ENCODE measurements at regions of chr4 and their contacts with region 1.

Region 1: DNA sequence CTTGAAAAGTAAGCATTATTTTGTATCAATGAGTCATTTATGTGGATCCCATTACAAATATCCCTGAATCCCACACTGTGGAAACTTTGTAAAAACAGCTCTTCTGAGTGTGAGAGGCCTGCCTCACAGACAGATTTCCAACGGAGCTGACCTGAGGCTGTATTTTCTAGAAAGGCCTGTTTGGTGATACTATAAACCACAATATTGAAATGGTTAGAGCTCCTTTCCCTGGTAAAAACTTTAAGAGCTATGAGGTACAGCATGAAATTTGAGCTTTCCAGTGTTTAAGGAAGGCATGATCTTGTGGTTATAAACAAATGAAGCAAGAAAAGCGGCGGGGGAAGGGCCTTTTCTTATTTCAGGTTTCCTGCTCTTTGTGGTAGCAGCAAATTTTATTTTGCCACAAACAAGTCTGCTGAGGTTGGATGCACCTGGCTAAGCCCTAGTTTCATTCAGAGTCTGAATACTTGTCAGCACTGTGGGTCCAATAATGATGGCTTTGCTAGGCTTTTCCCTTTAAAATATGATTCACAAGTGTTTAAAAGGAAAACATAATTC is 86.8 kb upstream of the ETNPPL start:
- DNase-seq: peak in 3 of 9 donors; percentile 13 to 35 (median 24)
- ATAC-seq: no peak
- H3K4me3 ChIP-seq: no peak overlapping the region
- H3K4me3 Mint-ChIP-seq: peak overlapping the region in 7 of 10 donors; percentile 12 to 54 (median 45)
- H3K27ac ChIP-seq: peak overlapping the region; percentile 29
- H3K27ac Mint-ChIP-seq: peak overlapping the region in 4 of 9 donors; percentile 4 to 75 (median 38)
- H3K4me1 ChIP-seq: peaks cover 0 to 13% of the 10 kb centered on the region in 2 donors
- H3K4me1 Mint-ChIP-seq: peaks cover 2 to 41% (median 27%) of the 10 kb centered on the region in 7 donors
- H3K27me3 ChIP-seq: no peaks in the 10 kb centered on the region
- H3K27me3 Mint-ChIP-seq: peaks cover 0 to 5% (median 4%) of the 10 kb centered on the region in 5 donors

Region 2: DNA sequence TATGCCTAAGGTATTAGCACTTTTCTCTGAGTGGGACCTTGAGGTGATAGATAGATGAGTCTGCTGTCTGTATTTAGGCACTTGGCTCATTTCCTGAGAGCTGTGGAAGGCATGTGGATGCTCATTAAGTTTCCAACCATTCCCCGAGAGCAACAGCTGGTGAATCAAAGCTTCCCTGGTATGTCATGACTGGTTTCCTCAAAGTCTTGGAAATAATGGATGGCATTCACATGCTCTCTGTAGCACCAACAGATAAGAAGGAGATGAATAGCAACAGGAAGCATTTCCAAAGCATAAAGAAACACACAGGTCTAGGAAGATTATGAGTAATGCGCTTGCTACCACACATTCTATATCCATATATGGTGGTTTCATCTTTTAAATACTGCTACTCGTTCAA is 31.5 kb after region 1 on chr4:
- CTCF ChIA-PET with region 1: no interaction called
- POLR2A ChIA-PET with region 1: no interaction called
- intact Hi-C with region 1: loop called in 1 of 2 experiments (anchors 5 kb)
- DNase-seq: no peak
- ATAC-seq: no peak
- H3K4me3 ChIP-seq: no peak overlapping the region
- H3K4me3 Mint-ChIP-seq: no peak overlapping the region
- H3K27ac ChIP-seq: no peak overlapping the region
- H3K27ac Mint-ChIP-seq: no peak overlapping the region
- H3K4me1 ChIP-seq: no peaks in the 10 kb centered on the region
- H3K4me1 Mint-ChIP-seq: peaks cover 0 to 25% (median 12%) of the 10 kb centered on the region in 7 donors
- H3K27me3 ChIP-seq: no peaks in the 10 kb centered on the region
- H3K27me3 Mint-ChIP-seq: peaks cover 0 to 4% (median 0%) of the 10 kb centered on the region in 5 donors

Region 3: DNA sequence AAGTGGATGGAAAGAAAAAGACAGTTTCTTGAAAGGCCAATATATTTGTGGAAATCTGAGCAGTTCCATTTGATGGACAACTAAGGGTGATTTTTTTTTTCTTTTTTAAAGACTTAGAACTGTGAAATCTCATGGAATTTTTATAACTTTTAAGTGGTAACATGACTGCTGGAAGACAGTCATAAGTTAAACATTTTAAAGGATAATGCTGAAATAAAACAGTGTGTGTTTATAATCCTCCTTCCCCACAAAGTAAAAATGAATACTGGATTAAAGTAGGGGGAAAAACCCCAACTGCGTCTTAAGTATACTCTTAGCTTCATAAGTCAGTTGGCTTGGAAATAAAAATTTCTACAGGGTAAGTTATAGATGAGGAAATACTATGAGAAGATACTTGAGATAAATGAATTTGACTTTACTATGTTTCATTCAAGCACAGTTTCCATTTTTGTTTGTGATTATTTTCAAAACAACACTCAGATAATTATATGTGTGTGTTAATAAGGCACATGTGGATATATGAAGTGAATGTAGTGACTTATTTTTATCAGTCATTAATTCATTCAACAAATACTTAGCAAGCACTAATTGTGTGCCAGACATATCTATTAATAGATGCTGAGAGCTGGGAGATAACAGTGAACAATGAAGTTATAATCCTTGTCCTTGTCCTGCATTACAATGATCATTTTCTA is 42.4 kb after region 1 on chr4:
- CTCF ChIA-PET with region 1: no interaction called
- POLR2A ChIA-PET with region 1: no interaction called
- intact Hi-C with region 1: no loop called
- DNase-seq: no peak
- ATAC-seq: no peak
- H3K4me3 ChIP-seq: no peak overlapping the region
- H3K4me3 Mint-ChIP-seq: no peak overlapping the region
- H3K27ac ChIP-seq: no peak overlapping the region
- H3K27ac Mint-ChIP-seq: no peak overlapping the region
- H3K4me1 ChIP-seq: no peaks in the 10 kb centered on the region
- H3K4me1 Mint-ChIP-seq: peaks cover 0 to 3% (median 0%) of the 10 kb centered on the region in 7 donors
- H3K27me3 ChIP-seq: no peaks in the 10 kb centered on the region
- H3K27me3 Mint-ChIP-seq: peaks cover 0 to 12% (median 0%) of the 10 kb centered on the region in 5 donors

Region 4: GRCh38 chr4:108902769-108903168 is 53.1 kb after region 1 on chr4:
- CTCF ChIA-PET with region 1: no interaction called
- POLR2A ChIA-PET with region 1: no interaction called
- intact Hi-C with region 1: loop called in 1 of 2 experiments (anchors 5 kb)
- DNase-seq: no peak
- ATAC-seq: no peak
- H3K4me3 ChIP-seq: no peak overlapping the region
- H3K4me3 Mint-ChIP-seq: no peak overlapping the region
- H3K27ac ChIP-seq: no peak overlapping the region
- H3K27ac Mint-ChIP-seq: no peak overlapping the region
- H3K4me1 ChIP-seq: no peaks in the 10 kb centered on the region
- H3K4me1 Mint-ChIP-seq: peaks cover 0 to 8% (median 0%) of the 10 kb centered on the region in 7 donors
- H3K27me3 ChIP-seq: no peaks in the 10 kb centered on the region
- H3K27me3 Mint-ChIP-seq: peaks cover 0 to 7% (median 0%) of the 10 kb centered on the region in 5 donors

Region 5: DNA sequence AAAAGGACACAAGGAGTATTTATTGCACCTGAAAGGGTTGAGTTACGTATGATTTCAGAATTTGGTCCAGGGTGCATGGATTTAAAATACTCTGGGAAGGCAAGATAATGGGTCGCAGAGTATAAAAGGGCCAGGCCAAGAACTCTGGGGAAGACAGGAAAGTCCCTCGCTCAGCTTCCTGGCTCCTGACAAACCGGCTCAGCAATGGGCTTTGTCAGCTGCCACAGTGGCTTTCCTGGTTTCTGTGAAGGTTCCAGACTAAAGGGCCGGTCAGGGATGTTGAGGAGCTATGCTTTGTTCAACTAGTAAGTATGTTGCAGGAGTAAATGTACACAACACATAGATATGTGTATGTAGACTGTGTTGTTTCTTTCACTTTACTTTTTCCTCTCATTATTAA is 67.6 kb after region 1 on chr4:
- CTCF ChIA-PET with region 1: no interaction called
- POLR2A ChIA-PET with region 1: no interaction called
- intact Hi-C with region 1: no loop called
- DNase-seq: no peak
- ATAC-seq: no peak
- H3K4me3 ChIP-seq: no peak overlapping the region
- H3K4me3 Mint-ChIP-seq: no peak overlapping the region
- H3K27ac ChIP-seq: no peak overlapping the region
- H3K27ac Mint-ChIP-seq: no peak overlapping the region
- H3K4me1 ChIP-seq: no peaks in the 10 kb centered on the region
- H3K4me1 Mint-ChIP-seq: peaks cover 0 to 2% (median 0%) of the 10 kb centered on the region in 7 donors
- H3K27me3 ChIP-seq: no peaks in the 10 kb centered on the region
- H3K27me3 Mint-ChIP-seq: peaks cover 0 to 14% (median 0%) of the 10 kb centered on the region in 5 donors

Region 6: DNA sequence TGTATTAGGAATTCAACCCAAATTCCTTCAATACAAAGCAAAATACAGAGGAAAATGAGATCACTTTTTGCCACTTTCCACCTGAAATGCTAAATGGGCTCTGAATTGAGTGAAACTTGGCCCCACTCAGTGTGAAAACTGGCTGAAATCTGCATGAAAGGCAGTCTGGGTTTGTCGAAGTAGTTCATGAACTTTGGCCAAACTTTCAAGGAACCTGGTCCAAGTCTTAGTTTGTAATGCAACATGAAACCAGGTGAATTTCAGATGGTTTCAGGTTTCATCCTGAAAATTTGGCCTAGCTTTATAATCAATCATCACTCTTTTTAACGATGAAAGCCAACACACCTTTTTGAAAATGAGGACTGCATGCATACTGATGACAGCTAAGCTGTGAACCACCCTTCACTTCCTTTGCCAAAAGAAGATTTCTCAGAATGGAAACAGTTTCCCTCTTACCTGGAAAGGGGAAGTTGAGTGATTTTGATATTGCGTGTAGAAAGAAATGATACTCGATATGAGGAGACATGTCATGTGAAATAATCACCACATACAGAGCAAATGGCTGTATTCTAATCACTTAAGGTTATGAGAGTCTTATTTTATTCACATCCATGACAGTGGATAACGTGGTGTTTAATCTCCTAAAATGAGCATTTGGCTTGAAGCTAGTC is 123.1 kb after region 1 on chr4:
- CTCF ChIA-PET with region 1: no interaction called
- POLR2A ChIA-PET with region 1: no interaction called
- intact Hi-C with region 1: loop called in 1 of 2 experiments (anchors 5 kb)
- DNase-seq: peak in 4 of 9 donors; percentile 2 to 19 (median 4)
- ATAC-seq: no peak
- H3K4me3 ChIP-seq: no peak overlapping the region
- H3K4me3 Mint-ChIP-seq: peak overlapping the region in 9 of 10 donors; percentile 37 to 81 (median 46)
- H3K27ac ChIP-seq: peak overlapping the region; percentile 45
- H3K27ac Mint-ChIP-seq: peak overlapping the region; percentile 5 to 93 (median 28)
- H3K4me1 ChIP-seq: peaks cover 0 to 12% of the 10 kb centered on the region in 2 donors
- H3K4me1 Mint-ChIP-seq: peaks cover 5 to 56% (median 37%) of the 10 kb centered on the region in 7 donors
- H3K27me3 ChIP-seq: no peaks in the 10 kb centered on the region
- H3K27me3 Mint-ChIP-seq: no peaks in the 10 kb centered on the region

Region 7: GRCh38 chr4:109184491-109184961 is 334.8 kb after region 1 on chr4:
- CTCF ChIA-PET with region 1: no interaction called
- POLR2A ChIA-PET with region 1: no interaction called
- intact Hi-C with region 1: no loop called
- DNase-seq: no peak
- ATAC-seq: no peak
- H3K4me3 ChIP-seq: no peak overlapping the region
- H3K4me3 Mint-ChIP-seq: no peak overlapping the region
- H3K27ac ChIP-seq: no peak overlapping the region
- H3K27ac Mint-ChIP-seq: no peak overlapping the region
- H3K4me1 ChIP-seq: no peaks in the 10 kb centered on the region
- H3K4me1 Mint-ChIP-seq: no peaks in the 10 kb centered on the region
- H3K27me3 ChIP-seq: peaks cover 0 to 5% of the 10 kb centered on the region in 2 donors
- H3K27me3 Mint-ChIP-seq: peaks cover 0 to 29% (median 13%) of the 10 kb centered on the region in 5 donors

Measured in naive thymus-derived CD4-positive, alpha-beta T cell (primary cell).